Stomach (tissue), 19 donors: ENCODE measurements at regions of chr7 and their contacts with region 1.

Region 1: GRCh38 chr7:100358027-100358865 is at the start of gene PILRB:
- DNase-seq: no peak
- H3K4me3 ChIP-seq: no peak within 1 kb of the TSS
- H3K27ac ChIP-seq: peak within 1 kb of the TSS in 2 of 5 donors; percentile 14 to 47
- H3K4me1 ChIP-seq: no peaks in the 10 kb centered on the region
- H3K27me3 ChIP-seq: no peaks in the 10 kb centered on the region
- CTCF ChIP-seq: no peak
- EP300 ChIP-seq: no peak
- POLR2A ChIP-seq: no peak
- total RNA-seq, gene PILRB: 18.5 to 141 (median 61.3) TPM

Region 2: DNA sequence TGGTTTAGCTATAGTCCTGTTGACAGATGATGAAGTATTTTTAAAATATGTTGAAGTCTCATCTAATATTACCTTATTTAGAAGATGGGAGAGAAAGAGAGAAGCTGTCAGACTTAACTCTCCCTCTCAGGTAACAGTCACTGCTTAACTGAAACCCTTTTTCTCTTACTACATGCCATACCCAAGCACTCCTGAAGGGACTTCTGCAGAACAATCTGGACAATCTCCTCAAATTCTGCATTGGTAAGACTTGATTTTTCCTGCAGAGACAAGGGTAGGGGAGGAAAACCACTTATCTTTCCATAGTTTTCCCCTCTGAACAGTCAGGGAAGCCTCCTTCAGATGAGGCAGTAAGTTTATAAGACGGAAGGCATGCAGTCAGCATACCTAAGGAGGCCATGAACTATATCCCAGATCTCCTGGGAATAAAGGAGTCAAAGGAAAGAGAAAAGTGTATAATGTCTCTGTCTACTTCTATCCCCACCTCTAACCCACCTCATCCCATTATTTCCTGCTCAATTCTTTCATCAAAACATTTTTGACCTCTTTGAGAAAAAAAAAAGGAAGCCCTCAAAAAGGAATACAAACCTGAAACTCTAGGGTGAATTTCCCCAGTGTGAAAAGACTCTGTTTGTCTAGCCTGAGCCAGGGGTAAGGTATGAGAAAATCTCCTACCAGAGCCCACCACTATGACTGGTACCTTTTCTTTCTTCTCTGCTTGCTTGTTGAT is 60.8 kb after region 1 on chr7:
- intact Hi-C with region 1: loop called (anchors 10 kb)
- DNase-seq: no peak
- H3K4me3 ChIP-seq: no peak overlapping the region
- H3K27ac ChIP-seq: no peak overlapping the region
- H3K4me1 ChIP-seq: no peaks in the 10 kb centered on the region
- H3K27me3 ChIP-seq: no peaks in the 10 kb centered on the region
- CTCF ChIP-seq: no peak
- EP300 ChIP-seq: no peak
- POLR2A ChIP-seq: no peak